Aorta (tissue), 5 donors: ENCODE measurements at regions of chr21 and their contacts with region 1.

Region 1: DNA sequence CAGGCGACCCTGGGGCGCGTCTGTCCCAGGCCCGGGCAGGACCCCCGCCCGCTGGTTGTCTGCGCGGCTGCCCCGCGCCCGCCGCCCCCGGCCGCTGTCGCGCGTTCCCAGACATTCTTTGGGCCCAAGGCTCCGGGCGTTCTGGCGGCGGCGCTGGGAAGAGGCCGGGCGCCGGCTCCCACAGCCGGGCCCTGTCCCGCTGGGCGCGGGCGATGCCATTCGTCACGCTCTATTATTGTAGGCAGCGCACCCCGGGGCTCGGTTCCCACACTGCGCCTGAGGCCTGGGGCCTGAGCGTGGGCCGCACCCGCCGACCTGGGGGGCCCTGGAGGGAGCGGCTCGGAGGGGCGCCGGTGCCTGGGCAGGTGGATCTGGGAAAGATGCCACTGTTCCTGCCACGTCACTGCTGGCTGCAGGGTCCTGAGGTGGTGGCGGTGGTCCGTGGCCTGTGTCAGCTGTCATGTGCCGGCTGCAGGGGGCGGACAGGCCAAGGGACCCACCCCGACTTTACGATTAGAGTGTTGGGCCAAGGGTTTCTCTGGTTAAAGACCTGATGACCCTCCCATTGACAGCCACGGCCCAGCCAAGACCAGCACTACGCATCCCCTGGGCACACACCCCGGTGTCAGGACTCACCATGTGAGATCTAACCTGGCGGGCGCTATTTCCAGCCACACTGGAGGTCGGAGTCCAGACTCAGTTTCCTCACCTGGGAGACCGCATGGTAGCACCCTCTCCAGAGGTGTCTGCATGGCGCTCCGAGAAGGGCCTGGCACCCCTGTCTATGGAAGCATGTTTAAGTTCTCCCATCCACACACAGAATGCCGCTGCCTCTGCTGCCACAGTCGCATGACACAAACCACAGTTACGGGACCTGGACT is 55.1 kb upstream of the ADARB1 start:
- DNase-seq: peak; percentile 77 to 94
- ATAC-seq: peak; percentile 81
- H3K4me3 ChIP-seq: no peak overlapping the region
- H3K27ac ChIP-seq: peak overlapping the region; percentile 71 to 95
- H3K4me1 ChIP-seq: no peaks in the 10 kb centered on the region
- H3K27me3 ChIP-seq: no peaks in the 10 kb centered on the region

Region 2: GRCh38 chr21:44958471-44959191 is 60.7 kb before region 1 on chr21:
- intact Hi-C with region 1: loop called in 1 of 2 experiments (anchors 5 kb)
- DNase-seq: peak; percentile 92 to 96
- ATAC-seq: peak; percentile 91
- H3K4me3 ChIP-seq: no peak overlapping the region
- H3K27ac ChIP-seq: peak overlapping the region; percentile 58 to 85
- H3K4me1 ChIP-seq: no peaks in the 10 kb centered on the region
- H3K27me3 ChIP-seq: no peaks in the 10 kb centered on the region

Region 3: GRCh38 chr21:45000977-45001728 is 18.2 kb before region 1 on chr21:
- intact Hi-C with region 1: no loop called
- DNase-seq: peak; percentile 89 to 96
- ATAC-seq: peak; percentile 81
- H3K4me3 ChIP-seq: no peak overlapping the region
- H3K27ac ChIP-seq: peak overlapping the region in 1 of 2 donors; percentile 59
- H3K4me1 ChIP-seq: no peaks in the 10 kb centered on the region
- H3K27me3 ChIP-seq: no peaks in the 10 kb centered on the region

Region 4: DNA sequence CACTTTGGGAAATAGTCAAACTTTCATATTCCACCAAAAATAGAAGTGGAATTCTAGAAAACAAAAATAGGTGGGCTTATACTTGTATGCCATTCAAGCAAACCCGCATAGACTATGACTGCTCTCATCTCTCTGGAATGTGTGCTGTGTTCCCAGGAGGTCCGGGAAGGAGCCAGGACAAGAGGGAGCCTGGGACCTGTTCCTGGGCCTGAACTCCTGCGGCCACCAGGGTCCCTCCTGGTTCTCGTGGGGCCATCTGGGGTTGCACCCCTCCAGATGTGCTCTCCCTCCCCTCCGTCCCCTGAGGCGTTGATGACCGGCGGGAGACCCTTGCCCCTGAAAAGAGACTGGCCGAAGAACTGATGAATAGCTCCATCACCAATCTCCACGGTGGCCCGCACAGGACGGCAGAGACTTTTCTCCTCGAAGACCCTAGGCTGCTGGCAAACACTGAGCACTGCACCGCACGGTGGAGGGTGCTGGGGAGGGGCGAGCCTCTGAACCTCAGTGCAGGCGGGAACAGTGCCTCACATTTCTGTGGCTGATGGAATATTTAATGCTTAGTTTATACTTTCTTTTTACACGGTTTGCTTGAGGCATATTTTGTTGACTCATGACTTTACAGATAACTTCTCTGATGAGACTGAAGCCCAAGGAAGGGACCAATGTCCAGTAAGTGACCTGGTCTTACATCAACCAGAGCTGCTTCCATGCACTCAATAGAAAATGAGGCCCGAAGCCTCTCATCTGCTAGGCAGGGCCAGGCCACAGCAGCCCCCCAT is 45.5 kb after region 1 on chr21:
- intact Hi-C with region 1: loop called in 1 of 2 experiments (anchors 5 kb)
- DNase-seq: peak in 1 of 2 donors; percentile 78
- ATAC-seq: peak; percentile 75
- H3K4me3 ChIP-seq: no peak overlapping the region
- H3K27ac ChIP-seq: peak overlapping the region; percentile 32 to 99
- H3K4me1 ChIP-seq: peaks cover 0 to 2% of the 10 kb centered on the region in 2 donors
- H3K27me3 ChIP-seq: no peaks in the 10 kb centered on the region

Region 5: DNA sequence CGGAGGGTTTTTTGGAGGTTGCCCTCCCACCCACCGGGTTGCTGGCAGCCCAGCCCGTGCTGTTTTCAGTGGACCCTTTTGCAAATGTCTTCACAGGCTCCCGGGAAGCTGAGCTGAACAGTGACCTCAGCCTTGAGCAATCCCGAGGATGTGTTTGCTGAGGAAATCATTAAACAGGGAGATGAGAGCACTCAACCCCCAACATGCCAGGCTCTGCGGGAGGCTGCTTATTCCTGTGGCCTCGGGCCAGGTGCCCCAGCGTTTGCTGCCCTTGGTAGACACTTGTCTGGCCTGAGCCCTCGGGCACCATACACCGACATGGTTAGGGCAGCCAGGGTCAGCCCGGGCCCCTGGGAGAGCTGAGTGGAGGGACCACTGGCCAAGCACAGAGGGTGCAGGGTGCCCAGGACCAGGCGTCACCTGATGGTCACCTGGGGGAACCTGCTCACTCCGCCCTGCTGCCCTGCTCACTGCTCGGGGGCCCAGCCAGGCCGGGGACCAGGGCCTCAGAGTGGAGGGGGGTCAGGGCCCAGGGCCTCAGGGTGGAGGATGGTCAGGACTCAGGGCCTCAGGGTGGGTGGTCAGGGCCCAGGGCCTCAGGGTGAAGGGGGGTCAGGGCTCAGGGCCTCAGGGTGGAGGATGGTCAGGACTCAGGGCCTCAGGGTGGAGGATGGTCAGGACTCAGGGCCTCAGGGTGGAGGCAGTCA is 310.9 kb after region 1 on chr21:
- intact Hi-C with region 1: no loop called
- DNase-seq: peak; percentile 59 to 82
- ATAC-seq: no peak
- H3K4me3 ChIP-seq: no peak overlapping the region
- H3K27ac ChIP-seq: peak overlapping the region in 1 of 2 donors; percentile 7
- H3K4me1 ChIP-seq: no peaks in the 10 kb centered on the region
- H3K27me3 ChIP-seq: no peaks in the 10 kb centered on the region